Natural killer cell (primary cell): ENCODE measurements at regions of chr1 and their contacts with region 1.

Region 1: DNA sequence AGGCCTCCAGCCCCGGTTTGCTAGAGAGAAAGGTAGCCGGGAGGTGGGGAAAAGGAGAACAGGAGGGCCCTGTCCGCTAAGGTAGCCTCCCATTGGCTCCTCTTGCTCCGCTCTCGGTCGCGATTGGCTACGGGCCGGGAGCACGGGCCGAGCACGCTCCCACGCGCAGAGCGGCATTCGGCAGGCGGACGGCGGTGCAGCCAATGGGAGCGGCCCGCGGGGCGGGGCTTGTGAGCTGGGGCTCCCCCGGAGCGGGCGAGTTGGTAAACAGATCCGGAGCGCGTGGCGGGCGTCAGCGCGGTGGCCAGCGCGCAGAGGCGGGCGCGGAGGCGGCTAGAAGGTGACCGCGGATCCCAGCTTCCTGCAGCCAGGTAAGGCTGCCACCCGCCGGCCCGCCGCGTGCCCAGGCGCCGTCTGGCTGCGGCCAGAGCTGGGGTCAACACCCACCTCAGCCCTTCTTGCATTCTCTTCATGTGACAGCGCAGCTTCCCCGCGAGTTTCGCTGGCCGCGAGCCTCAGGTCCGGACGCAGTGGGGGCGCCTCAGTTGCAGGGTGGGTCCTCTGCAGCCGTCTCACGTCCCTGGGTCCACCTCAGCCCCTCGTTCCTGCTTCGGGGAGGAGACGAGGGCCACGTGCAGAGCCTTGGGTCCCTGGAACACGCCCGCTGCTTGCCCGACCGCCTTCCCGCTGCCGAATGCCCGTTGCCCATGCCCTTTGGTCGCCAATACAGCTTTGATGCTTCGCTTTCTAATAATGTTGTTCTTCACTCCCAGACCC is at the start of gene COQ8A:
- DNase-seq: peak; percentile 99 to 100
- ATAC-seq: peak; percentile 89 to 96 (median 91)
- H3K4me3 ChIP-seq: peak within 1 kb of the TSS; percentile 85
- H3K4me3 Mint-ChIP-seq: peak within 1 kb of the TSS; percentile 94
- H3K27ac ChIP-seq: peak within 1 kb of the TSS; percentile 99
- H3K27ac Mint-ChIP-seq: peak within 1 kb of the TSS; percentile 96
- H3K4me1 ChIP-seq: peaks cover 26% of the 10 kb centered on the region
- H3K4me1 Mint-ChIP-seq: peaks cover 48 to 62% of the 10 kb centered on the region in 2 donors
- H3K27me3 ChIP-seq: no peaks in the 10 kb centered on the region
- H3K27me3 Mint-ChIP-seq: no peaks in the 10 kb centered on the region
- CTCF ChIP-seq: no peak
- total RNA-seq, gene COQ8A: 42.9 to 59.7 (median 56.2) TPM

Region 2: GRCh38 chr1:226407497-226408284 is 532.5 kb before region 1 on chr1 and contains the start of gene PARP1:
- intact Hi-C with region 1: loop called (anchors 5 kb)
- DNase-seq: peak; percentile 88 to 93
- ATAC-seq: peak; percentile 90 to 95 (median 90)
- H3K4me3 ChIP-seq: peak within 1 kb of the TSS; percentile 80
- H3K4me3 Mint-ChIP-seq: peak within 1 kb of the TSS; percentile 97
- H3K27ac ChIP-seq: peak within 1 kb of the TSS; percentile 72
- H3K27ac Mint-ChIP-seq: peak within 1 kb of the TSS; percentile 92 to 95
- H3K4me1 ChIP-seq: peaks cover 48% of the 10 kb centered on the region
- H3K4me1 Mint-ChIP-seq: peaks cover 51 to 54% of the 10 kb centered on the region in 2 donors
- H3K27me3 ChIP-seq: no peaks in the 10 kb centered on the region
- H3K27me3 Mint-ChIP-seq: no peaks in the 10 kb centered on the region
- CTCF ChIP-seq: peak; percentile 79
- total RNA-seq, gene PARP1: 62.0 to 81.5 (median 77.0) TPM

Region 3: GRCh38 chr1:226870401-226871279 is 69.6 kb before region 1 on chr1 and contains the start of gene PSEN2:
- intact Hi-C with region 1: loop called (anchors 1 kb)
- DNase-seq: peak; percentile 60 to 64
- ATAC-seq: peak; percentile 89 to 94 (median 94)
- H3K4me3 ChIP-seq: peak within 1 kb of the TSS; percentile 45
- H3K4me3 Mint-ChIP-seq: peak within 1 kb of the TSS; percentile 94
- H3K27ac ChIP-seq: no peak within 1 kb of the TSS
- H3K27ac Mint-ChIP-seq: peak within 1 kb of the TSS; percentile 77 to 84
- H3K4me1 ChIP-seq: peaks cover 16% of the 10 kb centered on the region
- H3K4me1 Mint-ChIP-seq: peaks cover 16 to 27% of the 10 kb centered on the region in 2 donors
- H3K27me3 ChIP-seq: no peaks in the 10 kb centered on the region
- H3K27me3 Mint-ChIP-seq: no peaks in the 10 kb centered on the region
- CTCF ChIP-seq: no peak
- total RNA-seq, gene PSEN2: 12.6 to 22.8 (median 14.9) TPM

Region 4: DNA sequence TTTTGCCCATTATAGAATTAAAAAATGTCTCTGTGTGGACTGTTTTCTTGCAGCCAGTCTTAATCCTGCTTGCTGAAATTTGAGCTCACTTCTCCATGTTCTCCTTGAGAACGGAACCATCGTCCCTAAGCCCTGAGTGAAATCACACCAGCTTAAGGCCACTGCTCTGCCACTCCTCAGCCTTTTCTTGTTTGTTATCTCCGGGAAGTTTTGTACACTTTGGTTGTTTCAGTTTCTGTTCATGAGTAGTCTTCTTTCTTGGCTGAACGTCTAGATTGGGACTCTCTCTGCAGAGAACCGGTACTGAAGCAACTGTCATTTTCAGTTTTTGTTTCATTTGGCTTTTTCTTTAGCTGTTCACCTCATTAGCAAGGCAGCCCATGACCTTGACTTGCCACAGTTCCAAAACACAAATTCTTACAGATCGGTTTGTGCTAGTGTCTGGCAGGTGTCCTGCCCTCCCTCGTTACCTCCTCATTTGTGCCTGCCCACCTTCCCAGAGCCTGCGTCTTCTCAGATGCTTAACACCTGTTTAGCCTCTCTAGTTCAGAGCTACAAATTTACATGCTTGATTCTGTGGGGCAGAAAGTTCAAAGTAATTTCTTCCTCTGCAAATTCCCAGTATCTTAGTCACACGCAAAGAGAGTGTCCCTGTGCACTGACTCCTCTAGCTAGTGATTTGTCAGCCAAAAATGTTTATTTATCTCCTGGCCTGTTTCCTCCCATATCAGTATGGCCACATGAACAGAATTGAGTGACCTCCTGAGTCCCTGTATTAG is 57.4 kb before region 1 on chr1:
- intact Hi-C with region 1: loop called (anchors 2 kb)
- DNase-seq: peak in 1 of 2 donors; percentile 72
- ATAC-seq: peak; percentile 84 to 87 (median 85)
- H3K4me3 ChIP-seq: peak overlapping the region; percentile 26
- H3K4me3 Mint-ChIP-seq: peak overlapping the region; percentile 81
- H3K27ac ChIP-seq: peak overlapping the region; percentile 87
- H3K27ac Mint-ChIP-seq: peak overlapping the region; percentile 88 to 90
- H3K4me1 ChIP-seq: peaks cover 44% of the 10 kb centered on the region
- H3K4me1 Mint-ChIP-seq: peaks cover 38 to 41% of the 10 kb centered on the region in 2 donors
- H3K27me3 ChIP-seq: no peaks in the 10 kb centered on the region
- H3K27me3 Mint-ChIP-seq: no peaks in the 10 kb centered on the region
- CTCF ChIP-seq: no peak